Activated T-helper 1 cell treated with anti-CD3 and anti-CD28 coated beads, Interleukin-12 subunit alpha, Interleukin-12 subunit beta, Interleukin-2, Interleukin-4 antibody, amounts not matched to agents 30 ng/mL and 10 ng/mL and 1 ng/mL, durations not matched to agents 14 hours and 24 hours and 36 hours (primary cell): ENCODE measurements at regions of chr3 and their contacts with region 1.

Region 1: DNA sequence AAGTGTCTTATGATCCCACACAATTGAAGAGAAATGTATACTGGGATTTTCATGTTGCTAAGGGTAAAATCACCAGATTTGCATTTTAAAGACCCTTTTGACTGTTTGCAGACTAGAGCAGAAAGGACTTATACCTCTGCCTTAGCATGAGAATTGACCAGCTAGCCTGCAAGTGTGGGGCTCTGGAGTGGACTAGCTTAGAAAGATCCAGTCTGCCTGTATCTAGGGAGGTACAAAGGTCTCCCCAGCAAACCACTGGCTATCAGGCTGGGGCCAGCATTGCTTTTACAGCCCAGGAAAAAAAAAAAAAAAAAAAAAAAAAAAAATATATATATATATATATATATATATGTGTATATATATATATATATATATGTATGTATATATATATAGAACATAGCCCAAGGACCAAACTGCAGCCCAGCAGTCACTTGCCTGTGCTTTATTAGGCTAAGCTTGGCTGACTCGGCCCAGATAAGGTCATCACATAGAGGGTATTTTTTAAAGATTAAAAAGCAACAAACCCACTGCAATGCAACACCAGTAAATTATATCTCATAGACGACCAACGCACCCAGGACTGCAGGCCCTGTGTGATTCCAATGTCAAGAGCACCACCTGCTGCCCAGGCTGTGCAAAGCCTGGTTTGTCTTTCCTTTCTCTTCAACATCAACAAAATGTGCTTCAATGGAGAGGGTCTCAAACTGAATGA is 63.7 kb downstream of the DCLK3 start:
- DNase-seq: no peak
- H3K4me3 Mint-ChIP-seq: no peak overlapping the region
- H3K27ac Mint-ChIP-seq: no peak overlapping the region
- H3K4me1 Mint-ChIP-seq: no peaks in the 10 kb centered on the region
- H3K27me3 Mint-ChIP-seq: peaks cover 3% of the 10 kb centered on the region

Region 2: GRCh38 chr3:36380221-36381031 is 320.3 kb before region 1 on chr3 and contains the start of gene STAC:
- intact Hi-C with region 1: loop called (anchors 10 kb)
- DNase-seq: no peak
- H3K4me3 Mint-ChIP-seq: no peak within 1 kb of the TSS
- H3K27ac Mint-ChIP-seq: no peak within 1 kb of the TSS
- H3K4me1 Mint-ChIP-seq: no peaks in the 10 kb centered on the region
- H3K27me3 Mint-ChIP-seq: peaks cover 33% of the 10 kb centered on the region
- total RNA-seq, gene STAC: not detected in 2 replicates

Region 3: GRCh38 chr3:36635731-36636130 is 65.0 kb before region 1 on chr3:
- intact Hi-C with region 1: no loop called
- DNase-seq: no peak
- H3K4me3 Mint-ChIP-seq: no peak overlapping the region
- H3K27ac Mint-ChIP-seq: no peak overlapping the region
- H3K4me1 Mint-ChIP-seq: no peaks in the 10 kb centered on the region
- H3K27me3 Mint-ChIP-seq: no peaks in the 10 kb centered on the region

Region 4: GRCh38 chr3:36774072-36774471 is 73.4 kb after region 1 on chr3:
- intact Hi-C with region 1: no loop called
- DNase-seq: no peak
- H3K4me3 Mint-ChIP-seq: no peak overlapping the region
- H3K27ac Mint-ChIP-seq: no peak overlapping the region
- H3K4me1 Mint-ChIP-seq: no peaks in the 10 kb centered on the region
- H3K27me3 Mint-ChIP-seq: peaks cover 25% of the 10 kb centered on the region